ENCODE measurements at regions of chr3 and their contacts with region 1.

Region 1: GRCh38 chr3:187738331-187739093 is 6.8 kb downstream of the BCL6 start:
- DNase-seq: peak; percentile 39
- H3K4me3 ChIP-seq: peak overlapping the region; percentile 69 to 82 (median 74)
- H3K27ac ChIP-seq: peak overlapping the region; percentile 96 to 99 (median 98)
- H3K4me1 ChIP-seq: peaks cover 24 to 87% (median 25%) of the 10 kb centered on the region in 3 donors
- H3K27me3 ChIP-seq: no peaks in the 10 kb centered on the region
- CTCF ChIP-seq: peak; percentile 57 to 81 (median 66)
- POLR2A ChIP-seq: peak in 3 of 4 donors; percentile 29 to 39 (median 30)

Region 2: GRCh38 chr3:187590861-187591576 is 147.5 kb before region 1 on chr3:
- intact Hi-C with region 1: no loop called
- DNase-seq: no peak
- H3K4me3 ChIP-seq: no peak overlapping the region
- H3K27ac ChIP-seq: no peak overlapping the region
- H3K4me1 ChIP-seq: no peaks in the 10 kb centered on the region
- H3K27me3 ChIP-seq: peaks cover 0 to 15% (median 0%) of the 10 kb centered on the region in 4 donors
- CTCF ChIP-seq: no peak
- POLR2A ChIP-seq: no peak

Region 3: DNA sequence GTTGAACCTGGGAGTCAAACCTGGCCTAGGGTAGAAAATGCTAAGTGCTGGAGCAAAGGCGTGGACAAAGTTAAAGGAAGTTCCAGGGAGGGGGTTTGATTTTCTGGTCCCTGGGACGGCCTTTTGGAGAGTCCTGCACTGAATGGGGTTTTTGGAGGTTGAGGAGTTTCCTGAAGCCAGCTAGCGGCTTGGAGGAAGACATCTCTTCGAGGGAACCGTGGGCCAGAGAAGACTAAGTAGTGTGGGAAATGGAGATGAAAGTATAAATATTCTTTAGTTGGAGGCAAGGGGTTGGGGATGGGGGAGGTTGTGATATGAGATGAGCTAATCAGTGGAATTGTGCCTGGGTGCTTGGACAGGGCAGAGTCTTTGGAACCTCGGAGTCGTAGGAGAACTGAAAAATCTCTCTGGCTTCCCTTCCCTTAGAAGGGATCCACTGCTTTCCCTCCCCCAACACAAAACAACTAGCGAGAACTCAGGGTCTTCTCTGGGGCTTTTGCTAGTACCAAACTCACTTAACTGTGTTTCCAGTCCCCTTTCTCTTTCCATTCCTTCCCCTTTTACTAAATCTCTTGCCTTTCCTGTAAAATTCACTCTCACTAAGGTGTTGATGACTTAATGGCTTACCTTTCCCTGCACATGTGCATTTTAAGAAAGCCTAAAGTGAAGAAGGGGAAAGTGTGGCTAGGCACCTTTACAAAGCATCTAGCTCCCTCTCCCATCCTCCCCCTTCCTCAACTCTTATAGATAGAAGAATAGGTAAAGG is 416.5 kb after region 1 on chr3:
- intact Hi-C with region 1: loop called (anchors 5 kb)
- DNase-seq: no peak
- H3K4me3 ChIP-seq: peak overlapping the region; percentile 69 to 93 (median 92)
- H3K27ac ChIP-seq: peak overlapping the region; percentile 93 to 98 (median 96)
- H3K4me1 ChIP-seq: peaks cover 24 to 83% (median 28%) of the 10 kb centered on the region in 3 donors
- H3K27me3 ChIP-seq: no peaks in the 10 kb centered on the region
- CTCF ChIP-seq: no peak
- POLR2A ChIP-seq: no peak

Region 4: DNA sequence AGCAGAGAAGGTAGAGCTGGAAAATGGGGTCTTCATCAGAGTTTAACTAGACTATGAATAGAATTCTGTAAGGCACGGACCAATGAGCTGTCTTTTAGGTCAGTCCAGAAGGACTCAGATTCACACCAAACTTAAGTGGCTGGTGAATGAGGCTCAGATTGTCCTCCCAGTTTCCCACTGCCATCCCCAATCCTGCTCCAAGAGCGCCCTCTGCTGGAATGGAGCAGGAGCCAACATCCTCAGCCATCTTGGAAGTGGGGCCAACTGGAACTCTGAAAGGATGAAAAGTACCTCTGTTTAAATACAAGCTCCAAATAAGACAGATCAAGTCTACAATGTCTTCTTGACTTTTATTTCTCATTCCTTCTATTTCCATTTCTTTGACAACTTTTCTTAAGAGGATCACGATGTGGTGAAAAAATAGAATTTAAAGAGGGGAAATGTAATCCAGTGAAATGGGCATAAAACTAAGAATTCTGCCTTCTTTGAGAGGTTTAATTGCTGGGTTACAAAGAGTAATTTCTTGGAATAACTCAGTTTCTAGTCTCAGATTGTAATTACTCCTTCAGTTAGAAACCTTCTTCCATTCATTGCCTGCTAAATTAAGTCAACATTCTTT is 1216.2 kb after region 1 on chr3:
- intact Hi-C with region 1: loop called (anchors 5 kb)
- DNase-seq: peak; percentile 9
- H3K4me3 ChIP-seq: no peak overlapping the region
- H3K27ac ChIP-seq: peak overlapping the region in 2 of 4 donors; percentile 5 to 66
- H3K4me1 ChIP-seq: peaks cover 20 to 51% (median 26%) of the 10 kb centered on the region in 3 donors
- H3K27me3 ChIP-seq: no peaks in the 10 kb centered on the region
- CTCF ChIP-seq: peak; percentile 88 to 98 (median 95)
- POLR2A ChIP-seq: no peak

Region 5: DNA sequence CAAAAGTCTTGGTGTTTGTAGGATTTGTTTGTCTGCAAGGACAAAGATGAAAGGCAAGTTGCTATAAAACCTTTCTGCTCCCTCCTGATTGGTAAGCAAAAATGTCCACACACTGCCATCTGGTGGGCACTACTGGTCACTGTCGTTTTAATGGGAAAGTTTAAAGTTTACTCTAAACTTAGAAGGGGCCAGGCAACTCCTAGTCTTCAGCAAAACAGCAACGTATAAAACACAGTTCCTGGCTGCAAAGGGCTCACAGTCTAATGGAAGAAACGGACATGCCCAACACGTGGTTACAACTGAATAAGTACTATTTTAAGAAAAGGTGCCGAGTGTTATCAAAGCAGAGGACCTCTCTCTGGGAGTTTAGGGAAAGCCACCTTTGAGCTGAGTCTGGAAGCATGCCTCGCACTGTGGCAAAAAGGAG is 1409.6 kb after region 1 on chr3:
- intact Hi-C with region 1: loop called (anchors 10 kb)
- DNase-seq: no peak
- H3K4me3 ChIP-seq: no peak overlapping the region
- H3K27ac ChIP-seq: no peak overlapping the region
- H3K4me1 ChIP-seq: peaks cover 0 to 21% (median 7%) of the 10 kb centered on the region in 3 donors
- H3K27me3 ChIP-seq: no peaks in the 10 kb centered on the region
- CTCF ChIP-seq: peak; percentile 48 to 88 (median 81)
- POLR2A ChIP-seq: no peak